Panc1 (cell line): ENCODE measurements at regions of chr6 and their contacts with region 1.

Region 1: DNA sequence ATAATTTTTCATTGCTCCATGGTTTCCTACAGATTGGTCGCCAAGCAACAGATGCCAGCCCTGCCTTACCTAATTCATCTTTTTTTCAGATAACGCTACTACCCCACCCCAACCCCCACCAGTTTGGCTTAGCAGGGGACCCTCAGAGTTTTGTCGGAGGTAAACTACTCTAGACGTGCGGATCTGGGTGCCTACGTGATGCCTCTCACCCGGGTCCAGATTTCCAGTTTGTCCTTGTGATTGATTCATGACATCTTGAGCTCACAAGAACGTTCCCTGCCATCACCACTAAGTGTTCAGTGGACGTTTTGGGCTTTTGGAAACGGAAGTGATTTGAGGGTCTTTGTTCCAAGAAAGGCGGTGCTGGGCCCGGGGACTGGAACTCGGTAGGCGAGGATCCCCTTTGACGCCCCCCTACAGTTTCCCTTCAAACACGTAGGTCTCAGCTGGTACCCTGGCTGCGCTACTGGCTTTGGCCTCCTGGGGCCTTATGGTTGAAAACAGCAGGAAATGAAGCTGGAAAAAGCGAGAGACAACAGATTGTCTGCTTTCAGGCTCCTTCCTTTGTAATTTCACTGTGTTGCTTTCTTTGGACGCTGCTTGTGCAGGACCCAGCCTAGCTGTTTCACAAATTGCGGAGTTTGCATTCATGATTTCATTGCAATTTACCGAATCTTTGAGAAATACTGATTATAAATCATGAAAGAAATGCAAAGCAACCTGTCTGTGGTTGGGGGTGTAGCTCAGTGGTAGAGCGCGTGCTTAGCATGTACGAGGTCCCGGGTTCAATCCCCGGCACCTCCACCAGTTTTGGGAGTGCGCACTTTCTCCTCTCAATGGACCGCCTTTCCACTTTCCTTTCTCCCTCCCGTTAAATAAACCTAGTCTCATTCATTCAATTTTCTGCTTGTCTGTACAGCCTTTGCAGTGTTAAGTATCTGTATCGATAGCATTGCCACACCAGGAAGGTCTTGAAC is 81.0 kb downstream of the GPX5 start:
- DNase-seq: peak; percentile 81
- ATAC-seq: peak; percentile 99
- H3K4me3 ChIP-seq: peak overlapping the region; percentile 65 to 74
- H3K27ac ChIP-seq: peak overlapping the region; percentile 67; the same call in 1 of the 2 replicates
- H3K4me1 ChIP-seq: peaks cover 11% of the 10 kb centered on the region
- H3K27me3 ChIP-seq: peaks cover 3% of the 10 kb centered on the region; the same call in 1 of the 2 replicates
- CTCF ChIP-seq: peak; percentile 58

Region 2: GRCh38 chr6:28371706-28372451 is 234.8 kb before region 1 on chr6:
- CTCF ChIA-PET with region 1: no interaction called
- POLR2A ChIA-PET with region 1: no interaction called
- in situ Hi-C with region 1: no loop called
- intact Hi-C with region 1: no loop called
- DNase-seq: no peak
- ATAC-seq: no peak
- H3K4me3 ChIP-seq: no peak overlapping the region
- H3K27ac ChIP-seq: no peak overlapping the region
- H3K4me1 ChIP-seq: no peaks in the 10 kb centered on the region
- H3K27me3 ChIP-seq: no peaks in the 10 kb centered on the region
- CTCF ChIP-seq: no peak

Region 3: DNA sequence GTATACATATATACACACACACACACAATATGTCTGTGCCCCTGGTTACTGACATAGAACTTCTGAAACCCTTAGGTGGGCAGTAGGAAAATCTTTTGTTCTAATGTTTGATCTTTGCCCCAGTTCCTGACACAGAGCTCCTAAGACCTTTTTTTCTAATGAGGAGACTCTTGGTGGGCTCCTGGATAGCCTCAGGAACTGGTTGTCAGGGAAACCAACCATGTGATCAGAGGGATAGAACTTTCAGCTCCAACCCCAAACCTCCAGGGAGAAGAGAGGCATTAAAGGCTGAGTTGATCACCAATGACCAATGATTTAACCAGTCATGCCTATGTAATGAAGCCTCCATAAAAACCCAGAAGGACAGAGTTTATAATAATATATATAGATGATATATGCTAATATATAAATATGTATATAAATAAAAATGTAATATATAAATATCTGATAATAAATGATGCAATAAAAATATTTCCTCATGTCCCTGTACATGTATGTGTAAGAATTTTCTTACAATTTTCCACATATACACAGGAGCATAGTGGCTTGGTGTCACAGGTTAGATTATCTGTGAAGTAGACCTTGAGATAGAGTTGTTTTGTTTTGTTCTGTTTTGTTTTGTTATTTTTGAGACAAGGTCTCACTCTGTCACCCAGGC is 12.3 kb after region 1 on chr6:
- CTCF ChIA-PET with region 1: no interaction called
- POLR2A ChIA-PET with region 1: no interaction called
- in situ Hi-C with region 1: no loop called
- intact Hi-C with region 1: no loop called
- DNase-seq: no peak
- ATAC-seq: no peak
- H3K4me3 ChIP-seq: no peak overlapping the region
- H3K27ac ChIP-seq: no peak overlapping the region
- H3K4me1 ChIP-seq: no peaks in the 10 kb centered on the region
- H3K27me3 ChIP-seq: no peaks in the 10 kb centered on the region
- CTCF ChIP-seq: no peak

Region 4: GRCh38 chr6:28673800-28674671 is 67.3 kb after region 1 on chr6:
- CTCF ChIA-PET with region 1: no interaction called
- POLR2A ChIA-PET with region 1: no interaction called
- in situ Hi-C with region 1: no loop called
- intact Hi-C with region 1: loop called (anchors 5 kb)
- DNase-seq: no peak
- ATAC-seq: peak; percentile 98
- H3K4me3 ChIP-seq: peak overlapping the region; percentile 70 to 89
- H3K27ac ChIP-seq: no peak overlapping the region
- H3K4me1 ChIP-seq: no peaks in the 10 kb centered on the region
- H3K27me3 ChIP-seq: no peaks in the 10 kb centered on the region
- CTCF ChIP-seq: no peak

Region 5: DNA sequence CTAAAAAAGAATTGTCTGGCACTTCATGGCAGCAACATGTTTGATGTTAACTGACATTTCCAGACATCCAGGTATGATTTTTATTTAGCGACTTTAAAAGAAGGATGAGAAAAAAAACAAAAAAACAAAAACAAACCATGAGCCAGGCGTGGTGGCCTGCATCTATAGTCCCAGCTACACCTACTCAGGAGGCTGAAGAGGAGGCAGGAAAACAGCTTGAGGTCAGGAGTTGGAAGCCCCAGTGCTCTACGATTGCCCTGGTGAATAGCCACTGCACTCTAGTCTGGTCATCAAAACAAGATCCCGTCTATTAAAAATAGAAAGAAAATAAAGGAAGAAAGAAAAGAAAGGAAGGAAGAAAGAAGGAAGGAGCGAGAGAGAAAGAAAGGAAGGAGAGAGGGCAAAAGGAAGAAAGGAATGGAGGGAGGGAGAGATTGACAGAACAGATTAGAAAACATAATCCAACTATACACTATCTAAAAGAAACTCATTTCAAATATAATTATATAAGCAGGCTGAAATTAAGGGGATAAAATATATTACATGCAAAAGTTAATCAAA is 175.5 kb after region 1 on chr6:
- CTCF ChIA-PET with region 1: no interaction called
- POLR2A ChIA-PET with region 1: no interaction called
- in situ Hi-C with region 1: no loop called
- intact Hi-C with region 1: no loop called
- DNase-seq: no peak
- ATAC-seq: 0 out of 2 replicates have a peak, but pooled peaks have one; percentile 68
- H3K4me3 ChIP-seq: peak overlapping the region; percentile 38 to 50
- H3K27ac ChIP-seq: peak overlapping the region; percentile 37
- H3K4me1 ChIP-seq: peaks cover 5% of the 10 kb centered on the region; the same call in 1 of the 2 replicates
- H3K27me3 ChIP-seq: peaks cover 2% of the 10 kb centered on the region; the same call in 1 of the 2 replicates
- CTCF ChIP-seq: no peak